ENCODE measurements at regions of chr11 and their contacts with region 1.

Region 1: DNA sequence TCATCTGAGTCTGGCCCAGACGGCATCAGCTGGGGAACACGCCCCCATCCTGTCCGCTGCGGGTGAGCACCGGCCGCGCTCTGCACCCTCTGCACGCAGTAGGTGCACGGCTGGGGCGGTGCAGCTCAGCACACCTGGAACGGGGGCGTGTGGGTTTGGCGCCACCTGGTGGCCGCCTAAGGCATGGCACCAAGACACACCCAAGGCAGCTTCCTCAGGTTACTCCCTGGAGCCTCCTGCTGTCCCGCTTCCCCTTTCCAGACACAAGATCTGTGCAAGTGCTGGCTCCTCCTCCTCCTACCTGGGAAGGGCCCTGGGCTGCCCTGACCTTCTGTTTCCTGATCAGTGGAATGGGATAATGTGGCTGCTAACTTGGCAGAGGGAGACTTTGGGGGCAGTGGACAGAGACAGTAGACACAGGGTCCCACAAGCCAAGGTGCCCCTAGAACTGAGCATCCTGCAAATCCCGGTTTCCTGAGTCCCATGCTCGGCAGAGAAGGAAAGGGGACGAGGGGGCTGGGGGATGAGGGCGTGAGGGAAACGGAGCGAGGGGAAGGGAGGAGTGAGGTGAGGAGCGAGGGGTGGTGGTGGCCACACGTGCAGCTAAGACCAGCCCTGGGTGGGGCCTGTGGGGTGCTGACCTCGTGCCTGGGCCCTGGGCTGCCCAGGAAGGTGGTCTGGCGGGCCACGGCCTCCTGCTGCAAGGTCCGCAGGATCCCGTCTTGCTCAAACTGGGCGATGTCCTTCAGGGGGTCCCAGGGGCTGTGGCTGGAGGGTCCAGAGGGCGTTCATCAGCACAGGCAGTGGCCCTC is 34.8 kb upstream of the CARS1 start:
- DNase-seq: peak; percentile 78
- H3K4me3 ChIP-seq: no peak overlapping the region
- H3K27ac ChIP-seq: no peak overlapping the region
- H3K4me1 ChIP-seq: no peaks in the 10 kb centered on the region
- H3K27me3 ChIP-seq: no peaks in the 10 kb centered on the region
- CTCF ChIP-seq: peak; percentile 93 to 100 (median 97)
- POLR2A ChIP-seq: no peak

Region 2: DNA sequence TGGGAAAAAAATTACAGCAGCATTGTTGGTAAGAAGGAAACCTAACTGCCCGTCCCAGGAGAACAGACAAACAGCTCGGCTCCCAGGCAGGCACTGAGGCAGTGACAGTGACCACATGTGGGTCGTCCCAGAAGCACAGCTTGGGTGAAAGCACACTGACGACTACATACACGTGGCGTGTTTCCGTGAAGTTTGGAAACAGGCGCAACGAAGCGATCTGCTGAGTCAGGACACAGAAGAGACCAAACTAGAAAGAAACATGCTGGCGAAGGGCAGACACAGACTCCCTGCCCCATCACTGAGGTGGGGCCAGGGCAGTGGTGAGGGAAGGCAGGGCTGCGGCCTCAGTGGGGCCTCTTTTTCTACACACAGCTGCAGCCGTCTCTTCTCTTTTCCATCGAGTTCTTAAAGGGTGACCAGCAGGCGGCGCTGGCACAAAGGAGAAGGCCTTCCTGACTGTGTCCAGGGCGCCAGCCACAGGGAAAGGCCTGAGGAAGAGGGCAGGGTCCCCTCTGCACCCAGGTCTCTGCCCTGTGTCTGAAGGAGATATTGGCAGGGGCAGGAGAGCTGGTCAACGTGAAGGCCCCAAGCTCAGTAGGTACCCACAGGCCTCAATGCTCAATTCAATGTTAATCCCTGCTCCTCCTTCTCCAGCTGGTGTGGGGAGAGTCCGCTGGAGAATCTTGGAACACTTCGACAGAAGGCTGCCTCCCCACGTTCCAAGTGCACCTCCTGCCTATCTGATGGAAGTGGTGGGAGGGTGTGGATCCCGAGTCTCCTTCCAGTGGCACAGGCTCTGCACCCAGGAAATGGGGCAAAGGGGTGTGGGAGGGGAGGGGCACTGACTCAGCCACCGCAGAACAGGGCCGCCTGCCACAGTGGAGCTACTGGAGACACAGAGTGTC is 54.7 kb before region 1 on chr11:
- intact Hi-C with region 1: loop called (anchors 5 kb)
- DNase-seq: peak; percentile 85
- H3K4me3 ChIP-seq: no peak overlapping the region
- H3K27ac ChIP-seq: no peak overlapping the region
- H3K4me1 ChIP-seq: no peaks in the 10 kb centered on the region
- H3K27me3 ChIP-seq: no peaks in the 10 kb centered on the region
- CTCF ChIP-seq: peak; percentile 73 to 83 (median 75)
- POLR2A ChIP-seq: no peak

Region 3: GRCh38 chr11:3153291-3153861 is 61.4 kb after region 1 on chr11:
- intact Hi-C with region 1: loop called (anchors 10 kb)
- DNase-seq: peak; percentile 73
- H3K4me3 ChIP-seq: no peak overlapping the region
- H3K27ac ChIP-seq: peak overlapping the region; percentile 21 to 72
- H3K4me1 ChIP-seq: peaks cover 39% of the 10 kb centered on the region
- H3K27me3 ChIP-seq: no peaks in the 10 kb centered on the region
- CTCF ChIP-seq: no peak
- POLR2A ChIP-seq: no peak